CD8-positive, alpha-beta T cell (primary cell): ENCODE measurements at regions of chr3 and their contacts with region 1.

Region 1: GRCh38 chr3:122564155-122564912 is at the starts of genes DTX3L and PARP9:
- DNase-seq: peak; percentile 39 to 91 (median 80)
- ATAC-seq: peak; percentile 93
- H3K4me3 ChIP-seq: peak within 1 kb of the TSS; percentile 81 to 85
- H3K4me3 Mint-ChIP-seq: peak within 1 kb of the TSS; percentile 92
- H3K27ac ChIP-seq: peak within 1 kb of the TSS; percentile 83 to 88
- H3K27ac Mint-ChIP-seq: peak within 1 kb of the TSS; percentile 96
- H3K4me1 ChIP-seq: peaks cover 39% of the 10 kb centered on the region
- H3K4me1 Mint-ChIP-seq: peaks cover 75% of the 10 kb centered on the region
- H3K27me3 ChIP-seq: no peaks in the 10 kb centered on the region
- H3K27me3 Mint-ChIP-seq: no peaks in the 10 kb centered on the region
- CTCF ChIP-seq: no peak
- total RNA-seq, gene DTX3L: 14.1 to 14.3 TPM
- total RNA-seq, gene PARP9: 12.0 to 12.1 TPM

Region 2: GRCh38 chr3:122101646-122102045 is 462.7 kb before region 1 on chr3:
- CTCF ChIA-PET with region 1: no interaction called
- POLR2A ChIA-PET with region 1: no interaction called
- intact Hi-C with region 1: loop called in 1 of 2 experiments (anchors 5 kb)
- DNase-seq: peak in 3 of 9 experiments; percentile 16 to 78 (median 67)
- ATAC-seq: peak; percentile 72
- H3K4me3 ChIP-seq: no peak overlapping the region
- H3K4me3 Mint-ChIP-seq: no peak overlapping the region
- H3K27ac ChIP-seq: no peak overlapping the region
- H3K27ac Mint-ChIP-seq: no peak overlapping the region
- H3K4me1 ChIP-seq: peaks cover 6% of the 10 kb centered on the region
- H3K4me1 Mint-ChIP-seq: peaks cover 15% of the 10 kb centered on the region
- H3K27me3 ChIP-seq: no peaks in the 10 kb centered on the region
- H3K27me3 Mint-ChIP-seq: no peaks in the 10 kb centered on the region
- CTCF ChIP-seq: peak; percentile 39

Region 3: DNA sequence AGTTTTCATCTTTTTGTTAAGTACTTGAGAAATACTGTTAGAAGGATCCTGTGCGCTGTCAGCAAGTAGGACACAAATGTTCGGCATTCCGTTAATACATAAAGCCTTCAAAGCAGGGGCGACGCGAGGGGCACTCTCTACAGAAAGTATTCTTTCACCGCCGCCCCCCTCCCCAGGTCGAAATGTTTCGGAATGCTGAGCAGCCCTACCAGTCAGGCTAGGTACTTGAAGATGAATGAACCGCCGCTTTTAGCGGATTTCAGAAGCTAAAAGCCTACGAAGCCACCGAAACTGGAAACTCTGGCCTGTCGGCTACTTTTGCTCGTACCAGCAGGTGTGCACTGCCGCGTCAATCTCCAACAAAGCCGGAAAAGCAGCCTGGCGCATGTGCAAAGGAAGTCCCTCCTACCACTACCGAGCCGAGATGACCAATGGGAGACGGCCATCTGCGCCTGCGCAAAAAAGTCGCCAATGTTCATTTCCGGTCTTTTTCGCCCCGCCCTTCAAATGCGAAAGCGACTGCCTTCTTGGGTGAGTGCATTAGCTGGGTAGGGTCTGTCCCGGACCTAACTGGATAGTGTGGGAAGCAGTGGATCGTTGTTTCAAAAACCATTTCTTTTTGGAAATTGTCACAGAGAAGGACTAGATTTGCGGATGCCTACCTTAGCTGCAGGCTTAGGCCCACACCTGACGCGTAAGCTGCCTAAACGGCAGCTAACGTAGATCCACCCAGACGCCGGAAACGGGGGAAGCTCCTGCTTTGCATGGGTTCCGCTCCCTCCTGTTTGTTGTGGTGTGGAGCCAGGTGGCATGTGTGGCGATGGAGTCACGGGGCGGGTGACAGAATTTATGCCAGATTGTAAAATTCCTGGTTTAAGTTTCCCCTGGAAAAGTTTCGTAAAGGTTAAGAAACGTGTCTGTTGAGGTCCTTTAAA is 148.3 kb before region 1 on chr3 and contains the start of gene WDR5B:
- CTCF ChIA-PET with region 1: no interaction called
- POLR2A ChIA-PET with region 1: interaction called, 3 read pairs
- intact Hi-C with region 1: loop called (anchors 1 to 5 kb)
- DNase-seq: peak; percentile 97 to 99 (median 98)
- ATAC-seq: peak; percentile 88
- H3K4me3 ChIP-seq: peak within 1 kb of the TSS; percentile 71 to 76
- H3K4me3 Mint-ChIP-seq: peak within 1 kb of the TSS; percentile 97
- H3K27ac ChIP-seq: peak within 1 kb of the TSS; percentile 91 to 94
- H3K27ac Mint-ChIP-seq: peak within 1 kb of the TSS; percentile 100
- H3K4me1 ChIP-seq: peaks cover 26% of the 10 kb centered on the region
- H3K4me1 Mint-ChIP-seq: peaks cover 58% of the 10 kb centered on the region
- H3K27me3 ChIP-seq: no peaks in the 10 kb centered on the region
- H3K27me3 Mint-ChIP-seq: no peaks in the 10 kb centered on the region
- CTCF ChIP-seq: no peak
- total RNA-seq, gene WDR5B: 1.9 to 2.7 TPM

Region 4: GRCh38 chr3:122619040-122619439 is 54.7 kb after region 1 on chr3:
- CTCF ChIA-PET with region 1: interaction called, 4 read pairs
- POLR2A ChIA-PET with region 1: no interaction called
- intact Hi-C with region 1: loop called in 1 of 2 experiments (anchors 5 kb)
- DNase-seq: no peak
- ATAC-seq: no peak
- H3K4me3 ChIP-seq: no peak overlapping the region
- H3K4me3 Mint-ChIP-seq: no peak overlapping the region
- H3K27ac ChIP-seq: no peak overlapping the region
- H3K27ac Mint-ChIP-seq: no peak overlapping the region
- H3K4me1 ChIP-seq: no peaks in the 10 kb centered on the region
- H3K4me1 Mint-ChIP-seq: no peaks in the 10 kb centered on the region
- H3K27me3 ChIP-seq: no peaks in the 10 kb centered on the region
- H3K27me3 Mint-ChIP-seq: no peaks in the 10 kb centered on the region
- CTCF ChIP-seq: no peak

Region 5: DNA sequence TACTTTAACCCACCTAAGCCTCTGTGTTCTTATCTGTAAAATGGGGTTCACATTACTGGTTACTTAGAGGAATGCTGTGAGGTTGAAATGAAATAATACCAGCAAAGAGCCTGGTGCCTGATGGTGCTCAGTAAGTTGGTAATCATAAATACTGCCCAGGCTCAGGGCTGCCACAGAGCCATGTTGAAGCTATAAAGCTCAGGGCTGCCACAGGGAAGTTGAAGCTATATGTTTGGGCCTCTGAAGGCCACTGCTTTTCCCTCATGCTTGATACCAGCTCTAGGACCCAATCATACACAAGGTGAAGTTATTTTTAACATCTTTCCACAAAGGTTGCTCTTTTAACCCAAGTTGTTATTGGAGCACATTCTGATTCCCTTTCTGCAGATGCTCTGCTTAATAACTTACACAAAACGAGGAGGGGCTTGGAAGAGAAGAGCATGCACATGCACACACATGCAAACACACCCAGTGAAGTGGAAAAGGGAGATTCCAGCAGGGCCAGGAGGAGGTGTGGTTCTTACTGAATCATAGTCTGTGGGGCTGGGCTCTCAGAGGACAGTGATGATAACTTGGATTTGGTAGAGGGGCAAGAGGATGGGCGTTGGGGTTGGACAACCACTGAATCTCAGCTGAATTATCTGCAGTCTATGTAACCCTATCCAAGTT is 133.8 kb after region 1 on chr3:
- CTCF ChIA-PET with region 1: interaction called, 10 read pairs
- POLR2A ChIA-PET with region 1: no interaction called
- intact Hi-C with region 1: no loop called
- DNase-seq: peak in 1 of 9 experiments; percentile 27
- ATAC-seq: no peak
- H3K4me3 ChIP-seq: no peak overlapping the region
- H3K4me3 Mint-ChIP-seq: no peak overlapping the region
- H3K27ac ChIP-seq: no peak overlapping the region
- H3K27ac Mint-ChIP-seq: peak overlapping the region; percentile 3
- H3K4me1 ChIP-seq: no peaks in the 10 kb centered on the region
- H3K4me1 Mint-ChIP-seq: peaks cover 15% of the 10 kb centered on the region
- H3K27me3 ChIP-seq: no peaks in the 10 kb centered on the region
- H3K27me3 Mint-ChIP-seq: no peaks in the 10 kb centered on the region
- CTCF ChIP-seq: no peak

Region 6: DNA sequence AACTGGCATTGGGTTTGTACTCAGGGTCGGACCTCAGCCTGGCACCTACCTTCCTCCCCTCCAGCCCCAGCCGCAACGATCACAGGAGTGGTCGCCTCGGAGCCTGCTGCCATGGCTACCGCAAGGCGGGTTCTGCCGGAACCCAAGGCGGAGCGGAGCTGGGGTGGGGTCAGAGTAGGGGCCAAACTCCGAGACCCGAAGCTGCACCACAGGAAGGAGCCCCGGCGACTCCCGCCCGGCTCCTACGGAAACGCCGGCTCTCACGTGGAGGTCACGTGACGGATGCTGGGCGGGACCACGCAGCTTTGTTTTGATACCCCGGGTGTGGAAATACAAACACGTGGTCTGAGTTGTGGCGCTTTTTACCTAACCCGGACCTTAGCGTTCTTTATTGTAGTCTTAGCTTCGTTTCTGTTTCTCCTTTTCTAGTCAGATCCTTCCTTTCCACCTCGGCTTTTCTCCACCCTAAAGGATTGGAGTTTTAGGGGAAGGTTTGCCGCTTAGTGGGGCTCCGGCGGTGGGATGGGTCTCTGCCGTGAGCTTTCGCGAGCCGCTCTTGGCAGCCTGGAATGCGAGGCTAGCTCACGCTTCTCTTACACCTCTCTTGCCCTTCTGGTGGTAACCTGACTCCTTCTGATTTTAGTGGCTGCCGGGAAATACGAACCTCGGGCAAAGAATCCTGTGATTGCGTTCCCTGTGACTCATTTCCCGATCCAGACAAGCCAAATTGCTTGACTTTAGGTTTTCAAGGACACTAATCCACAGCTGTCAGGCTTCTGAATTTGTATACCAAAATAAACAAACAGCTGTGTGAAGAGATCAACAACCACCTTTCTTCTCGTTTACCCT is 229.5 kb after region 1 on chr3 and contains the start of gene HSPBAP1:
- CTCF ChIA-PET with region 1: no interaction called
- POLR2A ChIA-PET with region 1: no interaction called
- intact Hi-C with region 1: loop called (anchors 1 to 5 kb)
- DNase-seq: peak; percentile 72 to 95 (median 90)
- ATAC-seq: peak; percentile 67
- H3K4me3 ChIP-seq: peak within 1 kb of the TSS; percentile 78 to 81
- H3K4me3 Mint-ChIP-seq: peak within 1 kb of the TSS; percentile 91
- H3K27ac ChIP-seq: peak within 1 kb of the TSS; percentile 77 to 91
- H3K27ac Mint-ChIP-seq: no peak within 1 kb of the TSS
- H3K4me1 ChIP-seq: peaks cover 28% of the 10 kb centered on the region
- H3K4me1 Mint-ChIP-seq: peaks cover 38% of the 10 kb centered on the region
- H3K27me3 ChIP-seq: no peaks in the 10 kb centered on the region
- H3K27me3 Mint-ChIP-seq: no peaks in the 10 kb centered on the region
- CTCF ChIP-seq: no peak
- total RNA-seq, gene HSPBAP1: 8.7 to 9.3 TPM

Region 7: GRCh38 chr3:123028233-123028828 is 464.0 kb after region 1 on chr3:
- CTCF ChIA-PET with region 1: no interaction called
- POLR2A ChIA-PET with region 1: no interaction called
- intact Hi-C with region 1: loop called (anchors 5 kb)
- DNase-seq: peak in 3 of 9 experiments; percentile 13 to 54 (median 45)
- ATAC-seq: no peak
- H3K4me3 ChIP-seq: peak overlapping the region; percentile 46 to 49
- H3K4me3 Mint-ChIP-seq: peak overlapping the region; percentile 76
- H3K27ac ChIP-seq: no peak overlapping the region
- H3K27ac Mint-ChIP-seq: no peak overlapping the region
- H3K4me1 ChIP-seq: peaks cover 7% of the 10 kb centered on the region
- H3K4me1 Mint-ChIP-seq: peaks cover 22% of the 10 kb centered on the region
- H3K27me3 ChIP-seq: peaks cover 16 to 28% of the 10 kb centered on the region in 2 experiments
- H3K27me3 Mint-ChIP-seq: peaks cover 56% of the 10 kb centered on the region
- CTCF ChIP-seq: peak; percentile 17